Activated T-helper 2 cell treated with anti-CD3 and anti-CD28 coated beads, Interferon-gamma antibody, Interleukin-2, Interleukin-4, amounts not matched to agents 10 μg/mL and 5 μg/mL and 100 μg/mL, durations not matched to agents 14 hours and 24 hours and 36 hours (primary cell): ENCODE measurements at regions of chr1 and their contacts with region 1.

Region 1: GRCh38 chr1:1122078-1122811 is 6.4 kb upstream of the C1orf159 start:
- DNase-seq: peak; percentile 75
- H3K4me3 Mint-ChIP-seq: peak overlapping the region; percentile 26
- H3K27ac Mint-ChIP-seq: no peak overlapping the region
- H3K4me1 Mint-ChIP-seq: no peaks in the 10 kb centered on the region
- H3K27me3 Mint-ChIP-seq: peaks cover 12% of the 10 kb centered on the region

Region 2: GRCh38 chr1:818618-819291 is 303.5 kb before region 1 on chr1:
- intact Hi-C with region 1: no loop called
- DNase-seq: no peak
- H3K4me3 Mint-ChIP-seq: no peak overlapping the region
- H3K27ac Mint-ChIP-seq: no peak overlapping the region
- H3K4me1 Mint-ChIP-seq: peaks cover 4% of the 10 kb centered on the region
- H3K27me3 Mint-ChIP-seq: no peaks in the 10 kb centered on the region

Region 3: DNA sequence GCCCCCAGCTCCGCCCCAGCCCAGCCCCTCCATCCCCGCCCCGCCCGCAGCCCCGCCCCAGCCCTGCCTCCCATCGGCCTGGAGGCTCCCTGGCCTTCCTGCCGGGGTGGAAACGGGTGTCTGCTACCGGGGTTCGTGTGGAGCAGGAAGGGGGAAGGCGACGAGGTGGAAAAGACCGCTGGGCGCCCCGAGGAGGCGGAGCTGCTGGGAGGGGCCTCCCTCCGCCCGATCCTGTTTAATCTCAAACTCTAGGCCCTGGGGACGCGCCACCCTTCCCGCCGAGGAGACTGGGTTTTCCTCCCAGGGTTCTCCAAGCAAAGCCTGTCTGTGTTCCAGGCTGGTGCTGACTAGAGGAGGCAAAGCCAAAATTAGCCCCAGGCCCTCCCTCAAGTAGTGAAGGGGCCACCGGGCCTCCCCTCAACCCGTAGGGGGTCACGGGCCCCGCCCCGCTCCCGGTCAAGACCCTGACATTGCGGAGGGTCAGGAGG is 35.2 kb after region 1 on chr1:
- intact Hi-C with region 1: no loop called
- DNase-seq: peak; percentile 57
- H3K4me3 Mint-ChIP-seq: peak overlapping the region; percentile 71
- H3K27ac Mint-ChIP-seq: peak overlapping the region; percentile 46
- H3K4me1 Mint-ChIP-seq: no peaks in the 10 kb centered on the region
- H3K27me3 Mint-ChIP-seq: peaks cover 3% of the 10 kb centered on the region

Region 4: DNA sequence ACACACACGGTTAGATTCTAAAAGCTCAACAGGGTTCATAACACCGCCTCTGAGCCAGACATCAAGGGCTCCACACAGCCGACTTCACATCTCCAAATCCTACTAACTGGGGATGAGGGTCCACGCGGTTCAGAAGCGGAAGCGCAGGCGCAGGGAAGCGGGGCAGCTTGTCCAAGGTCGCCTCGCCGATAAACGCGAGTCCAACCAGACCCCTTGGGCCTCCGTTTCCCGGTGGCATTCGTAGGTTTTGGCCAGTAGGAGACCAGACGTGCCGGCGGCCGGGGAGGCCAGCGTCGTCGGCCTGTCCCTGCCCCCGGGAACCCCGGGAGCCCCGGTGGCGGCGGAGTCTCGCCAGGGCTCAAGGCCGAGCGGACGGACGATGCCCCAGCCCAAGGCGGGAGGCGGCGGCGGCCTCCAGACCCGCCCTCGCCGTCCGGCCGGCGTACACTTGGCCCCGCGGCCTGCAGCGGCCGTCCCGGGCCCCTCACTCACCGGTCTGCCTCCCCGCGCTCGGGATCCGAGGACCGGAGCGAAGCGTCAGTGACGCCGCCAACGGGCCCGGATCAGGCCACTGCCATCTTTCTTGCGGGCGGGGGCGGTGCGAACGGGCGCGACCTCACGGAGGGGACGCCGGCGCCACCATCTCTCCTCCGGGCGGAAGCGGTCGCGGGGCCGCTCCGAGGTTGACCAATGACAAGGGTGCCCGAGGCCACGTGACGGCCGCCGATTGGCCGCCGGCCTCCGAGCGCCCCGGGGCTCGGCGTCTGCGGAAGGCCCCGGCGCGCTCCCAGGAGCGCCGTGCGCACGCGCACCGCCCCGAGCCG is 109.4 kb after region 1 on chr1 and contains the start of gene SDF4:
- intact Hi-C with region 1: loop called (anchors 1 kb)
- DNase-seq: peak; percentile 97
- H3K4me3 Mint-ChIP-seq: peak within 1 kb of the TSS; percentile 92
- H3K27ac Mint-ChIP-seq: peak within 1 kb of the TSS; percentile 81
- H3K4me1 Mint-ChIP-seq: peaks cover 23% of the 10 kb centered on the region
- H3K27me3 Mint-ChIP-seq: no peaks in the 10 kb centered on the region
- total RNA-seq, gene SDF4: 161 and 164 TPM in 2 replicates

Region 5: DNA sequence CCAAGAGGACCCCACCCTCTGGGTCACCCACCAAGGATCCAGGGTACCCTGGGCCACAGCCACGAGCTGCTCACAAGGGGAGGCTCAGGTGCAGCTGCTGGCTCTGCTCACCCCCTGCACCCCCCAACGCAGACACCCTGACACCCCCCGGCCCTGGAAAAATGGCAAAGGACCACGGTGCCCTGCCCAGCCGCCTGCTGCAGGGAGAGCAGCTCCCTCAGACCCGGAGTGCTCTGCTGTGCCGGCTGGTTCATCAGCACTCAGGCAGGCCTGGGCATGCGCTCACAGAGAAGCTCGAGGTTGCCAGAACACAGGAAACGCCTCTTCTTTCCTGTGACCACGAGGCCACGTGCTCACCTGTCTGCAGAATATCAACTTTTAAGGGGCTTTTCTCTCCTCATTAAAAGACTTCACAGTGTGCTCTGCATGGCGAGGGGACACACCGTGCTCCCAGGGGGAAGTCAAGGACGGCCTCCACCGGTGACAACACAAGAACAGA is 128.6 kb after region 1 on chr1:
- intact Hi-C with region 1: loop called (anchors 5 kb)
- DNase-seq: peak; percentile 59
- H3K4me3 Mint-ChIP-seq: no peak overlapping the region
- H3K27ac Mint-ChIP-seq: peak overlapping the region; percentile 90
- H3K4me1 Mint-ChIP-seq: peaks cover 4% of the 10 kb centered on the region
- H3K27me3 Mint-ChIP-seq: no peaks in the 10 kb centered on the region

Region 6: GRCh38 chr1:1291548-1292441 is 169.6 kb after region 1 on chr1:
- intact Hi-C with region 1: loop called (anchors 5 kb)
- DNase-seq: peak; percentile 51
- H3K4me3 Mint-ChIP-seq: no peak overlapping the region
- H3K27ac Mint-ChIP-seq: no peak overlapping the region
- H3K4me1 Mint-ChIP-seq: no peaks in the 10 kb centered on the region
- H3K27me3 Mint-ChIP-seq: no peaks in the 10 kb centered on the region